K562 (cell line): ENCODE measurements at regions of chr14 and their contacts with region 1.

Region 1: GRCh38 chr14:35121887-35122695 is at the starts of genes PPP2R3C and PRORP:
- DNase-seq: peak; percentile 58 to 94 (median 88)
- ATAC-seq: peak; percentile 88
- H3K4me3 ChIP-seq: peak within 1 kb of the TSS; percentile 62
- H3K27ac ChIP-seq: peak within 1 kb of the TSS; percentile 99
- H3K4me1 ChIP-seq: peaks cover 4 to 9% of the 10 kb centered on the region in 2 experiments; a peak in 4 of 5 replicates
- H3K27me3 ChIP-seq: no peaks in the 10 kb centered on the region
- CTCF ChIP-seq: no peak
- EP300 ChIP-seq: no peak
- POLR2A ChIP-seq: peak; percentile 66; the same call in 1 of the 2 replicates
- RAD21 ChIP-seq: no peak
- polyA plus RNA-seq, gene PPP2R3C: 41.9 to 43.3 TPM
- polyA plus RNA-seq, gene PRORP: 36.5 to 48.7 TPM

Region 2: DNA sequence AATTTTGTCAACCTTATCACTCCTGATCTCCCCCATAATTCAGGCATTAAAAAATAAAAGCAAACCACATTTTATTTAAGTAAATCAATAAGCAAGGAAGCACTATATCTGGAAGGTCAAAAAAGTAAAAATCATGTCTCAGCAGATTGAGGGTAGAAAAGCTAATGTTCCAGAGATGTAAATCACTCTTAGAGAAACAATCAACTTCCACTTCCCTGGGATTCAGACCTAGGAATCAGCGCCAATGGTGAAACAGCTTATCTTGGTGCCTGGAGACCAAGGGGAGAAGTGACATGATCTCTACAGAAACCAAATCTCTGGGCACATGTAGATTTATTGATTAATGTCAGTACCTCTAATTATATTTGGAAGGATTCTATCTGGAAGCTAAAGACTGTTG is 481.3 kb before region 1 on chr14:
- CTCF ChIA-PET with region 1: no interaction called
- POLR2A ChIA-PET with region 1: no interaction called
- in situ Hi-C with region 1: no loop called
- intact Hi-C with region 1: no loop called
- DNase-seq: no peak
- ATAC-seq: no peak
- H3K4me3 ChIP-seq: no peak overlapping the region
- H3K27ac ChIP-seq: no peak overlapping the region
- H3K4me1 ChIP-seq: peaks cover 0 to 3% of the 10 kb centered on the region in 2 experiments; a peak in 2 of 5 replicates
- H3K27me3 ChIP-seq: no peaks in the 10 kb centered on the region
- CTCF ChIP-seq: no peak
- EP300 ChIP-seq: no peak
- POLR2A ChIP-seq: no peak
- RAD21 ChIP-seq: no peak

Region 3: GRCh38 chr14:34875031-34875922 is 246.8 kb before region 1 on chr14 and contains the start of gene BAZ1A:
- CTCF ChIA-PET with region 1: no interaction called
- POLR2A ChIA-PET with region 1: interaction called, 3 read pairs
- in situ Hi-C with region 1: no loop called
- intact Hi-C with region 1: loop called (anchors 10 kb)
- DNase-seq: peak; percentile 69 to 81 (median 70)
- ATAC-seq: peak; percentile 44
- H3K4me3 ChIP-seq: peak within 1 kb of the TSS; percentile 96
- H3K27ac ChIP-seq: peak within 1 kb of the TSS; percentile 98
- H3K4me1 ChIP-seq: peaks cover 6 to 11% of the 10 kb centered on the region in 2 experiments; a peak in 4 of 5 replicates
- H3K27me3 ChIP-seq: no peaks in the 10 kb centered on the region
- CTCF ChIP-seq: no peak
- EP300 ChIP-seq: no peak; the same call in 1 of the 2 replicates
- POLR2A ChIP-seq: peak; percentile 90
- RAD21 ChIP-seq: no peak
- polyA plus RNA-seq, gene BAZ1A: 22.0 to 23.6 TPM

Region 4: GRCh38 chr14:34982417-34983147 is 139.5 kb before region 1 on chr14 and contains the start of gene SRP54:
- CTCF ChIA-PET with region 1: no interaction called
- POLR2A ChIA-PET with region 1: interaction called, 3 read pairs
- in situ Hi-C with region 1: no loop called
- intact Hi-C with region 1: loop called (anchors 5 kb)
- DNase-seq: peak; percentile 94 to 97 (median 96)
- ATAC-seq: peak; percentile 88
- H3K4me3 ChIP-seq: peak within 1 kb of the TSS; percentile 59
- H3K27ac ChIP-seq: peak within 1 kb of the TSS; percentile 97
- H3K4me1 ChIP-seq: peaks cover 4 to 6% of the 10 kb centered on the region in 2 experiments; a peak in 4 of 5 replicates
- H3K27me3 ChIP-seq: no peaks in the 10 kb centered on the region
- CTCF ChIP-seq: peak in 1 of 3 experiments; percentile 35; a peak in 2 of 6 replicates
- EP300 ChIP-seq: peak; percentile 25; the same call in 1 of the 2 replicates
- POLR2A ChIP-seq: peak; percentile 86
- RAD21 ChIP-seq: no peak
- polyA plus RNA-seq, gene SRP54: 44.1 to 64.5 TPM

Region 5: DNA sequence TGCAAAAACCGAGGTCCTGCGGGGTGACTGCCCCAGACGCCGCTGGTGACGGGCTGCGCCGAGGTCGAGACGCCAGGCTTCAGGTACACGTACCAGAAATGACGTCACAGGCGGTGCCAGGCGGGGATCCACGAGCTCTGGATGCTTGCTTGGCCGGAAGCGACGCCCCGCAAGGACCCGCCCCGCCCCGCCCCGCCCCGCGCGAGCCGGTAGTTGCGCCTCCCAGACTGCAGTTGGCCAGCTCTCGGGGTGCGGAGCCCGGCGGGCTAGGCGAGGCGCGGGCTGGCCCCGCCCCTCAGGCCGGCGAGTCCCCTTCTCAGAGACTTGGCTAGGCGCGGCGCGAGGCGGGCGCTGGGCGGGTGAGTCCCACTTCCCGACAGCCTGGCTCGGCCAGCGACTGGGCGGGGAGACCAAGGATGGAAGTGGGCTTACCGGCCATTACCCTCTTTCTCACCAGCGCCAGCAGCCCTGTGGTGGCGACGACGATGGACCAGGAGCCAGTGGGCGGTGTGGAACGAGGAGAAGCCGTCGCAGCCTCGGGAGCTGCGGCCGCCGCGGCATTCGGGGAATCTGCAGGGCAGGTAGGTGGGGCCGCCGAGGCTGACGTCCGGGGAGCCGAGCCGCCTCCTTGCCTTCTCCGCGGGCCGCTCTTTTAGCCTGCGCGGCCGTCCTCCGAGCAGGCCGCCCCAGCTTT is 75.9 kb before region 1 on chr14 and contains the start of gene FAM177A1:
- CTCF ChIA-PET with region 1: no interaction called
- POLR2A ChIA-PET with region 1: interaction called, 6 read pairs
- in situ Hi-C with region 1: no loop called
- intact Hi-C with region 1: loop called (anchors 2 kb)
- DNase-seq: peak; percentile 92 to 96 (median 93)
- ATAC-seq: peak; percentile 96
- H3K4me3 ChIP-seq: peak within 1 kb of the TSS; percentile 69
- H3K27ac ChIP-seq: peak within 1 kb of the TSS; percentile 86
- H3K4me1 ChIP-seq: peaks cover 9 to 16% of the 10 kb centered on the region in 2 experiments; a peak in 4 of 5 replicates
- H3K27me3 ChIP-seq: no peaks in the 10 kb centered on the region
- CTCF ChIP-seq: no peak
- EP300 ChIP-seq: no peak
- POLR2A ChIP-seq: peak; percentile 88
- RAD21 ChIP-seq: no peak
- polyA plus RNA-seq, gene FAM177A1: 7.7 to 12.1 TPM

Region 6: GRCh38 chr14:35088514-35088913 is 33.6 kb before region 1 on chr14:
- CTCF ChIA-PET with region 1: no interaction called
- POLR2A ChIA-PET with region 1: no interaction called
- in situ Hi-C with region 1: no loop called
- intact Hi-C with region 1: no loop called
- DNase-seq: no peak
- ATAC-seq: no peak
- H3K4me3 ChIP-seq: no peak overlapping the region
- H3K27ac ChIP-seq: no peak overlapping the region
- H3K4me1 ChIP-seq: no peaks in the 10 kb centered on the region
- H3K27me3 ChIP-seq: no peaks in the 10 kb centered on the region
- CTCF ChIP-seq: no peak
- EP300 ChIP-seq: no peak
- POLR2A ChIP-seq: no peak
- RAD21 ChIP-seq: no peak